ENCODE measurements at regions of chrX and their contacts with region 1.

Region 1: GRCh38 chrX:11566789-11567188 is 98.9 kb downstream of the ARHGAP6 start:
- DNase-seq: no peak
- H3K4me3 ChIP-seq: no peak overlapping the region
- H3K27ac ChIP-seq: no peak overlapping the region
- H3K4me1 ChIP-seq: no peaks in the 10 kb centered on the region
- H3K27me3 ChIP-seq: no peaks in the 10 kb centered on the region
- CTCF ChIP-seq: no peak

Region 2: GRCh38 chrX:11629593-11630211 is 62.9 kb after region 1 on chrX:
- intact Hi-C with region 1: loop called (anchors 10 kb)
- DNase-seq: peak; percentile 8 to 75
- H3K4me3 ChIP-seq: no peak overlapping the region
- H3K27ac ChIP-seq: no peak overlapping the region
- H3K4me1 ChIP-seq: no peaks in the 10 kb centered on the region
- H3K27me3 ChIP-seq: no peaks in the 10 kb centered on the region
- CTCF ChIP-seq: no peak

Region 3: DNA sequence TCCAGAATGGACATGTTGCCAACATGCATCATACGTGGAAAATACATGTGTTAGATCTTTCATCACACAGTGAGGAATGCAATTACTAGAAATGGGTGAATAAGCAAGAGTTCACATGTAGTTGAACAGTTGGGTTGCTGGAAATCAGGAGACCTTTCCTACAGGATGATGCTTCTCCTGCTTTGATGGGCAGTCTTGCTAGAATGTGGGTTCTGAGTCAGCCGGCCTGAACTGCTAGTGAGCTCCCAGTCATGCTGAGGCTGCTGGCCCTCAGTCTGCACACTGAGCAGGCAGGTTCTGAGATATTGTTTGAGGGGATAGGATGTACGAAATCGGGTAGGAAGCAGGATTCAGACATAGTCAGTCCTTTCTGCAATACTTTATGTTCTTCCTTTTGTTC is 211.4 kb after region 1 on chrX:
- intact Hi-C with region 1: no loop called
- DNase-seq: no peak
- H3K4me3 ChIP-seq: no peak overlapping the region
- H3K27ac ChIP-seq: no peak overlapping the region
- H3K4me1 ChIP-seq: no peaks in the 10 kb centered on the region
- H3K27me3 ChIP-seq: no peaks in the 10 kb centered on the region
- CTCF ChIP-seq: no peak